ENCODE measurements at regions of chr2 and their contacts with region 1.

Region 1: DNA sequence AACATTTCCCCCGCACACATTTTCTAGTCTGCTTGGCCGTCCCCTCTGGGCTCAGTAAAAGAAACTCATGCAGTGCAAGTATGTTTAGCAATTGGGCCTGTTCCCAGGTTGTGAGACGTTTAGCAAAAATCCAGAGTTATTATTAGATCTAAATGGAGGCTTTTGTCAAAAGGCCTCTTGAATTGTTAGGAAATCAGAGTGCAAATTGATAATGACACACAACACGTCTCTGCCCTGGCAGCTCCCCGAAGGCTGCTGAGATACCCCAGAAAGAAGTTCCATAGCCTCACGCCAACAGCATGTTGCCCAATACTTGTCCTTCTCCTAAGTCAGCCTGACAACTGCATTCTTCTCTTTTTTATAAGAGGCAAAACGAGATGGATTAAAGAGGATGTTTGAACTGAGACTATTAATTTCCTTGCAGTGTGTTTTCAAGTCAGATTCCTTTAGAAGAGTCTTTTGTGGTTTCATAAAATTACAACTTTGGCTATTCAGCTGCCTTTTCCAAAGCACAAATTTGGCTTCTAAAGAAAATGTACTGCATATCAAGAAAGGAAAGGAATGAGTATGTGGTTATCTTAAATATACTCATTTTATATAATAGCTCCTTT is 202.2 kb downstream of the TRIB2 start:
- DNase-seq: peak; percentile 95
- H3K4me3 ChIP-seq: no peak overlapping the region
- H3K27ac ChIP-seq: peak overlapping the region; percentile 59 to 77 (median 75)
- H3K4me1 ChIP-seq: peaks cover 0 to 33% (median 30%) of the 10 kb centered on the region in 4 donors
- H3K27me3 ChIP-seq: no peaks in the 10 kb centered on the region
- CTCF ChIP-seq: no peak
- EP300 ChIP-seq: peak; percentile 34 to 87 (median 62)
- POLR2A ChIP-seq: no peak

Region 2: GRCh38 chr2:12819103-12819475 is 99.9 kb before region 1 on chr2:
- intact Hi-C with region 1: loop called (anchors 10 kb)
- DNase-seq: peak; percentile 94
- H3K4me3 ChIP-seq: no peak overlapping the region
- H3K27ac ChIP-seq: peak overlapping the region; percentile 51 to 79 (median 63)
- H3K4me1 ChIP-seq: peaks cover 0 to 21% (median 17%) of the 10 kb centered on the region in 4 donors
- H3K27me3 ChIP-seq: no peaks in the 10 kb centered on the region
- CTCF ChIP-seq: no peak
- EP300 ChIP-seq: peak in 2 of 4 donors; percentile 46 to 66
- POLR2A ChIP-seq: no peak

Measured in sigmoid colon (tissue), 7 donors.